ENCODE measurements at regions of chr22 and their contacts with region 1.

Region 1: GRCh38 chr22:19419464-19420178 is 11.9 kb downstream of the HIRA start:
- DNase-seq: peak; percentile 87 to 96 (median 90)
- ATAC-seq: peak; percentile 68
- H3K4me3 ChIP-seq: no peak overlapping the region
- H3K27ac ChIP-seq: peak overlapping the region; percentile 64
- H3K4me1 ChIP-seq: peaks cover 44 to 50% of the 10 kb centered on the region in 2 experiments
- H3K27me3 ChIP-seq: no peaks in the 10 kb centered on the region
- CTCF ChIP-seq: peak in 1 of 3 experiments; percentile 19; a peak in 2 of 6 replicates
- EP300 ChIP-seq: peak; percentile 98
- POLR2A ChIP-seq: no peak
- RAD21 ChIP-seq: no peak

Region 2: DNA sequence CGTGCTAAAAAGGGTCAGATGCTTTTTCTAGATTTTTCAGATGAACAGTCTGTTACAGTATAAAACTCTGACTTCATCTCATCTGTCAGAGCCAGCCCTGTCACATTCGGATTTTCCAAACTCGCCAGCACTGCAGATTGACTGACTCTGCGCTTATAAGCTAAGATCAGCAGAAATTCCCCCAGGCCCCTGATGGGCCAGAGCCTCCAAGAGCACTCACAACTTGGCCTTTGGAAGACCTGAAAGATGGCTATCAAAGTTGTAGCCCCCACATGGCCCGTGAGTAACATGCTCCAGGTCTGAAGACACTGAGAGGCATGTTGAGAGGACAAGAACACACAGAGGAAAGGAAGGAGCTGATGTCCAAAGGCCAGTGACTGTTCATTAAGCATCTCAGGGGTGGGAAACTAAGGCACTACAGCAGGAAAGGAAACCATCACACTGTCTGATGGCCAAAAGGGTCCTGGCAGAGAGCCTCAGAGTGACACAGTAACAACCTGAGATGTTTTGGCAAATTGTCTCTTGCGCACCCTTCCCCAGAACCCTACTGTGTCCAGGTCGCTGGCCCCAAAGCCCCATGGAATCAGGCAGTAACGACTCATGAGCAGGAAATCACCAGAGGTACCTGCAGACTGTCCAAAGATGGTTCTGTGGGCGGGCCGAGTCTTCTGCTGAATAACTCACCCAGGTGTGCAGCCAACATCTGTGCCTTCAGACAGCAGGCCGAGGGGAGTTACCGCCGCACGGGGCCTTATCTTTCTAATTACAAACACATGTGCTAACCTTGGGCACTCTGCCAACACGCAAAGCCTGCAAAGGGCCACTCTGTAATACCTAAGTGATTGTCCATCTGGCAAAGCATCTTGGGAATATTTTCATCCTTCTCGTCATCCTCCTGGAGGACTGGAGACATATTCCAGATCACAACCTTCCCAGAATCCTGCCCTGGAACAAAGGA is 11.7 kb before region 1 on chr22:
- CTCF ChIA-PET with region 1: no interaction called
- POLR2A ChIA-PET with region 1: interaction called, 245 read pairs
- in situ Hi-C with region 1: no loop called
- intact Hi-C with region 1: loop called (anchors 1 kb)
- DNase-seq: peak; percentile 90 to 96 (median 94)
- ATAC-seq: peak; percentile 76
- H3K4me3 ChIP-seq: no peak overlapping the region
- H3K27ac ChIP-seq: no peak overlapping the region; the same call in 2 of the 3 replicates
- H3K4me1 ChIP-seq: peaks cover 18 to 24% of the 10 kb centered on the region in 2 experiments; a peak in 4 of 5 replicates
- H3K27me3 ChIP-seq: no peaks in the 10 kb centered on the region
- CTCF ChIP-seq: peak in 1 of 3 experiments; percentile 3; a peak in 1 of 6 replicates
- EP300 ChIP-seq: peak; percentile 91
- POLR2A ChIP-seq: peak; percentile 51; the same call in 1 of the 2 replicates
- RAD21 ChIP-seq: no peak; a peak in 1 of 4 replicates